PC-9 (cell line): ENCODE measurements at regions of chr7 and their contacts with region 1.

Region 1: GRCh38 chr7:105429746-105430612 is 41.3 kb upstream of the SRPK2 start:
- DNase-seq: peak; percentile 39 to 45
- H3K4me3 ChIP-seq: no peak overlapping the region
- H3K27ac ChIP-seq: no peak overlapping the region
- H3K4me1 ChIP-seq: no peaks in the 10 kb centered on the region
- H3K27me3 ChIP-seq: no peaks in the 10 kb centered on the region
- CTCF ChIP-seq: peak; percentile 70

Region 2: DNA sequence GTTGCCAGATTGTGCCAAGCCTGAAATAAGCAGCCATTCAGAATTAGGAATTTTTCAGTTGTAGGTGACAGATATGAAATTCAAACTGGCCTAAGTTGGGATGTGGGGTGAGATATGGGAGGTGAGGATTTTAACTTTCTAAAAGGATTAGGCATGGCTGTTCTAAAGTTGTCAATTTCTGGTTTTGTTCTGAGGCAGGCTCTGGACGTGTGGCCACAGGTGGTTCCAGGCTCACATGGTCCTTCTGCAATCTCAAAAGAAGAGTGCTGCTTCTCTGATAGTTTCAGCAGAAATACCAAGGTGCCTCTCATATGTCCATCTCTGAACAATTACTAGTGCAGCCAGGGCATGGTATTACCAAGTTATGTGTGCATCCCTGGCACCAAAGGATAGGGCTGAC is 129.9 kb after region 1 on chr7:
- CTCF ChIA-PET with region 1: interaction called, 15 read pairs
- POLR2A ChIA-PET with region 1: no interaction called
- intact Hi-C with region 1: no loop called
- DNase-seq: no peak
- H3K4me3 ChIP-seq: no peak overlapping the region
- H3K27ac ChIP-seq: no peak overlapping the region
- H3K4me1 ChIP-seq: no peaks in the 10 kb centered on the region
- H3K27me3 ChIP-seq: no peaks in the 10 kb centered on the region
- CTCF ChIP-seq: no peak